Naive thymus-derived CD4-positive, alpha-beta T cell (primary cell): ENCODE measurements at regions of chr12 and their contacts with region 1.

Region 1: DNA sequence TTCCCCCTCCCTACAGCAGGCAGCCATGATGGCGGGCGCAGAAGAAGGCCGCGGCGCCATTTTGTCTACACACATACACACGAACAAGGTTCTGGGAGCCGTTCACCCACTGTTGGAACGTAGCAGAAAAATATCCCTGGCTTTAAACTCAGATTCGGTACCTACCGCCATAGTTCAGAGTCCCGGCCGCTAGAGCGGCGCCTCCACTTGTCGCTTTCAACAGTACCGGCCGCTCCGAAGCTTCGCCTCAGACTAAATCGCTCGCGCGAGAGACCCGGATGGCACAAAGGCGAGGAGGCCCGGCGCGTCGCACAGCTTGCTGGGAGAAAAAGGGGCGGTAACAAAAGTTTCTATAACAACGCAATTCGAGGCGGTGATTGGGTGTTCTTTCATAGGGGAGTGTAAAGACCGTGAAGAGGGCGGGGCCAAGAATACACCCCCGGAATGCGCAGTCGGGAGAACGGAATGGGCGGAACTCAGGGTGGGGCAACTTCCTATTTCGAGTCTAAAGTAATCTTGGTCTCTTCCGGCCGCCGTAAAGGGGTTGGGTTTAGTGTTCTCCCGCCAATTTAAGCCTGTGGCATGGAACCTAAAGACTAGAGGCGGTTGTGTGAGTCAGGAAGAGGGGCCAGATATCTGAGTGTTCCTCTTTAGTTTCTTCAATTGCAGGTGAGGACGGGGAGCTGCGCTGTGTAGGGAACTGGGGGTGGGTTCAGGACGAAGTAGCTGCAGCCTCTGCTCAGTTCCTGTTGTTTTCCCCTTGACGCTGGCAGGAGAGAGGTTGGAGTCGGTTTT is at the starts of genes KNTC1 and RSRC2:
- DNase-seq: peak; percentile 87 to 99 (median 99)
- ATAC-seq: peak; percentile 96
- H3K4me3 ChIP-seq: peak within 1 kb of the TSS; percentile 86
- H3K4me3 Mint-ChIP-seq: no peak within 1 kb of the TSS
- H3K27ac ChIP-seq: peak within 1 kb of the TSS; percentile 94
- H3K27ac Mint-ChIP-seq: peak within 1 kb of the TSS in 1 of 9 donors; percentile 68
- H3K4me1 ChIP-seq: peaks cover 30 to 37% of the 10 kb centered on the region in 2 donors
- H3K4me1 Mint-ChIP-seq: peaks cover 24 to 41% (median 36%) of the 10 kb centered on the region in 7 donors
- H3K27me3 ChIP-seq: no peaks in the 10 kb centered on the region
- H3K27me3 Mint-ChIP-seq: no peaks in the 10 kb centered on the region
- total RNA-seq, gene KNTC1: 24.5 to 102 (median 31.0) TPM
- total RNA-seq, gene RSRC2: 89.7 to 249 (median 139) TPM

Region 2: GRCh38 chr12:121888478-121889266 is 638.2 kb before region 1 on chr12 and contains the start of gene PSMD9:
- CTCF ChIA-PET with region 1: no interaction called
- POLR2A ChIA-PET with region 1: no interaction called
- intact Hi-C with region 1: loop called (anchors 1 to 10 kb)
- DNase-seq: peak; percentile 96 to 99 (median 98)
- ATAC-seq: peak; percentile 98
- H3K4me3 ChIP-seq: peak within 1 kb of the TSS; percentile 74
- H3K4me3 Mint-ChIP-seq: peak within 1 kb of the TSS; percentile 85 to 100 (median 98)
- H3K27ac ChIP-seq: peak within 1 kb of the TSS; percentile 98
- H3K27ac Mint-ChIP-seq: peak within 1 kb of the TSS; percentile 92 to 100 (median 99)
- H3K4me1 ChIP-seq: peaks cover 19 to 21% of the 10 kb centered on the region in 2 donors
- H3K4me1 Mint-ChIP-seq: peaks cover 18 to 50% (median 40%) of the 10 kb centered on the region in 7 donors
- H3K27me3 ChIP-seq: no peaks in the 10 kb centered on the region
- H3K27me3 Mint-ChIP-seq: peaks cover 0 to 4% (median 0%) of the 10 kb centered on the region in 5 donors
- total RNA-seq, gene PSMD9: 36.7 to 55.2 (median 46.9) TPM

Region 3: GRCh38 chr12:121949648-121950397 is 577.1 kb before region 1 on chr12:
- CTCF ChIA-PET with region 1: no interaction called
- POLR2A ChIA-PET with region 1: no interaction called
- intact Hi-C with region 1: no loop called
- DNase-seq: no peak
- ATAC-seq: no peak
- H3K4me3 ChIP-seq: no peak overlapping the region
- H3K4me3 Mint-ChIP-seq: no peak overlapping the region
- H3K27ac ChIP-seq: no peak overlapping the region
- H3K27ac Mint-ChIP-seq: no peak overlapping the region
- H3K4me1 ChIP-seq: no peaks in the 10 kb centered on the region
- H3K4me1 Mint-ChIP-seq: no peaks in the 10 kb centered on the region
- H3K27me3 ChIP-seq: no peaks in the 10 kb centered on the region
- H3K27me3 Mint-ChIP-seq: peaks cover 0 to 10% (median 0%) of the 10 kb centered on the region in 5 donors

Region 4: DNA sequence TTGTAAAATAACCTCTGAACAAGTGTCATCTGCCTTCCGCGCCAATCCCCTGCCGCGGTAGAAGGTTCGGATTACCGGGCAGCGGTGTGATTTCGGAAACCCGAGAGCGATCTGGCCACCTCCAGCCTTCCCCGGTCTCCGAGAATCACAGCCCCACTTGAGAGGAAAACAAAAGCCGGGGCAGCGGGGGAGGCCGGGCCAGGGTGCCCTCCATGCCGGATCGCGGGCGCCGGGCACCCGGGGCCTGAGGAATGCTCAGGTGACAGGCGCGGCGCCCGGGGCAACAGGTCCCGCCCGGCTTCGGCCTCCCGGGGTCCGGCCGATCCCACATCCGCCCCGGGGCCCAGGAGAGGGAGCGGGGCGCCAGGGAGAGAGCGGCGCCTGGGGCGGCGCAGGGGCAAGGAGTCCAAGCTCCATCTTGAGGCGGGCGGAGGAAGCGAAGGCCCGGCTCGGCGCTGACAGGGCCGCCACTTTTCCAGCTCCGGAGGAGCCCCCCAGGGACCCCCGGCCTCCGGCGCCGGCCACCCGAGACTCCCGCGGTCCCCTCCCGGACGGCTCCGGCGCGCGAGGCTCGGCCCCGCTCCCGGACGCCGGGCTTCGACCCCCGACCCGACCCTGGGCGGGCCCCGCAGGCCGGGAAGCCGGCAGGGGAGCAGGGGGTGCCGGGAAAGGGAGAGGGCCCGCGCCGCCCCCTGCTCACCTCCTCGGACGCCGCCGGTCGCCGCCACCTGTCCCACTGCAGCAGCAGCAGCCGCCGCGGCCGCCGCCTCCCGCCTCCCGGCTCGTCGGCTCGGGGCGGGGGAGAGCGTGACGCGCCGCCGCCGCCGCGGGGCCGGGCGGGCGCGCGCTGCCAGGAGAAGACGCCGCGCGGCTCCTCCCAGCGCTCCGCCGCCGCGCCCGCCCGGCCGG is 104.8 kb before region 1 on chr12 and contains the start of gene CLIP1:
- CTCF ChIA-PET with region 1: no interaction called
- POLR2A ChIA-PET with region 1: no interaction called
- intact Hi-C with region 1: loop called in 1 of 2 experiments (anchors 2 kb)
- DNase-seq: peak; percentile 40 to 73 (median 57)
- ATAC-seq: peak; percentile 84
- H3K4me3 ChIP-seq: peak within 1 kb of the TSS; percentile 71
- H3K4me3 Mint-ChIP-seq: peak within 1 kb of the TSS; percentile 91 to 97 (median 92)
- H3K27ac ChIP-seq: peak within 1 kb of the TSS; percentile 90
- H3K27ac Mint-ChIP-seq: peak within 1 kb of the TSS; percentile 83 to 93 (median 91)
- H3K4me1 ChIP-seq: peaks cover 17 to 20% of the 10 kb centered on the region in 2 donors
- H3K4me1 Mint-ChIP-seq: peaks cover 23 to 39% (median 35%) of the 10 kb centered on the region in 7 donors
- H3K27me3 ChIP-seq: no peaks in the 10 kb centered on the region
- H3K27me3 Mint-ChIP-seq: no peaks in the 10 kb centered on the region
- total RNA-seq, gene CLIP1: 54.7 to 89.3 (median 65.1) TPM

Region 5: DNA sequence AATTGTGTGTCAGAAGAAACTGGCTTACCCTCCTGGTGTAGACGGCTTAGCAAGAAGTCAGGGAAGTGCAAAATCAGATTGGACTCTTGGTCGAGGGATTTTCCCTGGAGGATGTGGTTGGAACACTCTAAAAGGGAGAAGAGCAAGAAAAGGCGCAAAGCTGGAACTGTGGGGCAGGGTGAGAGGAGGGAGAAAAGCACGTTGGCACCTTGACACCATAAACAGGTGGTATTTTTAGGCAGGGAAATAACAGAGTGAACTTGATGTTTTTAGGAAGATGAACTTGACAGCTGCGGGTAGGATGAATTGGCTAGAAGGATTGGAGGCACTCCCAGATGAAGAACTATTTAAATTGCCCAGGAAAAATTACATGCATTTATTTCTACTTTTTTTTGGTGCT is 108.6 kb after region 1 on chr12:
- CTCF ChIA-PET with region 1: no interaction called
- POLR2A ChIA-PET with region 1: no interaction called
- intact Hi-C with region 1: no loop called
- DNase-seq: no peak
- ATAC-seq: no peak
- H3K4me3 ChIP-seq: no peak overlapping the region
- H3K4me3 Mint-ChIP-seq: no peak overlapping the region
- H3K27ac ChIP-seq: no peak overlapping the region
- H3K27ac Mint-ChIP-seq: peak overlapping the region in 1 of 9 donors; percentile 68
- H3K4me1 ChIP-seq: no peaks in the 10 kb centered on the region
- H3K4me1 Mint-ChIP-seq: peaks cover 0 to 3% (median 0%) of the 10 kb centered on the region in 7 donors
- H3K27me3 ChIP-seq: no peaks in the 10 kb centered on the region
- H3K27me3 Mint-ChIP-seq: no peaks in the 10 kb centered on the region

Region 6: GRCh38 chr12:122834104-122834920 is 307.4 kb after region 1 on chr12:
- CTCF ChIA-PET with region 1: no interaction called
- POLR2A ChIA-PET with region 1: no interaction called
- intact Hi-C with region 1: loop called in 1 of 2 experiments (anchors 1 kb)
- DNase-seq: peak in 2 of 9 donors; percentile 27 to 33
- ATAC-seq: peak; percentile 30
- H3K4me3 ChIP-seq: peak overlapping the region; percentile 55
- H3K4me3 Mint-ChIP-seq: peak overlapping the region; percentile 85 to 99 (median 92)
- H3K27ac ChIP-seq: peak overlapping the region; percentile 50
- H3K27ac Mint-ChIP-seq: peak overlapping the region; percentile 87 to 98 (median 95)
- H3K4me1 ChIP-seq: peaks cover 0 to 13% of the 10 kb centered on the region in 2 donors
- H3K4me1 Mint-ChIP-seq: peaks cover 30 to 48% (median 44%) of the 10 kb centered on the region in 7 donors
- H3K27me3 ChIP-seq: no peaks in the 10 kb centered on the region
- H3K27me3 Mint-ChIP-seq: peaks cover 0 to 29% (median 0%) of the 10 kb centered on the region in 5 donors

Region 7: GRCh38 chr12:123580772-123581171 is 1053.9 kb after region 1 on chr12:
- CTCF ChIA-PET with region 1: no interaction called
- POLR2A ChIA-PET with region 1: no interaction called
- intact Hi-C with region 1: loop called in 1 of 2 experiments (anchors 5 kb)
- DNase-seq: no peak
- ATAC-seq: no peak
- H3K4me3 ChIP-seq: no peak overlapping the region
- H3K4me3 Mint-ChIP-seq: no peak overlapping the region
- H3K27ac ChIP-seq: no peak overlapping the region
- H3K27ac Mint-ChIP-seq: peak overlapping the region in 4 of 9 donors; percentile 5 to 95 (median 44)
- H3K4me1 ChIP-seq: peaks cover 17 to 21% of the 10 kb centered on the region in 2 donors
- H3K4me1 Mint-ChIP-seq: peaks cover 20 to 30% (median 26%) of the 10 kb centered on the region in 7 donors
- H3K27me3 ChIP-seq: no peaks in the 10 kb centered on the region
- H3K27me3 Mint-ChIP-seq: no peaks in the 10 kb centered on the region